HCT116 (cell line): ENCODE measurements at regions of chr3 and their contacts with region 1.

Region 1: DNA sequence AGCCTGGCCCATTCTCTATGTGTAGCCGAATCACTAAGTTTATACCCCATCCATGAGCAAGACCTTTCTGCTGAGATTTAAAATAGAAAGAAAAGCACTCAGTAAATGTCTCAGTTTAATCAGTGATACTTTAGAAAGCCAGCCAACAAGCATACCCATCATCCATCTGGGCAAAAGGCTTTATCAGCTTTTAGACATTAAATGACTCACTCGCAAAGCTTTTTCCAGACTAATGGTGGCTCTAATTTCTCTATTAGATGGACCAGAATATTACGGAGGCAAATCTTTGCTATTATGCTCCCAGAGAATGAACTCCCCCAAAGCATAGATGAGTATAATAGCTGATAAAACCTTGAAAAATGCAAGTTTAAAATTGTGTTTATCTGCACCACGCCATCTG is 727.8 kb downstream of the GBE1 start:
- DNase-seq: no peak
- ATAC-seq: no peak
- H3K4me3 ChIP-seq: no peak overlapping the region
- H3K27ac ChIP-seq: no peak overlapping the region
- H3K4me1 ChIP-seq: no peaks in the 10 kb centered on the region
- H3K27me3 ChIP-seq: no peaks in the 10 kb centered on the region
- CTCF ChIP-seq: no peak
- POLR2A ChIP-seq: no peak
- RAD21 ChIP-seq: no peak

Region 2: DNA sequence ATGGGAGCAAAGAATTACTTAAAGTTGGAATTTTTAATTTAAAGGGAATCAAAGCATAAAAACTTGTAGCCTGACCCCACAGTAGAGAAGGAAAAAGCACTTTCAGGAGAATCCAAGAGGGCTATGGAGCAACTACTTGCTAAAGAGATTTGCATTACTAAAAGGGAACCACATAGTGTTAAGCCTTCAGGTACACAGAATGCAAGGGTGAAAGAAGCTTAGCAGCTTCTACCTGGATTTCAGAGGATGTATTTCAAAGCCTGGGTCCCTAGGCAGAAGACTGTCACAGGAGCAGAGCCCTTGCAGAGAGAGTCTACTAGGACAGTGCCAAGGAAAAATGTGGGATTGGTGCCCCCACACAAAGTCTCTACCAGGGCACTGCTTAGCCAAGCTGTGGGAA is 152.7 kb after region 1 on chr3:
- CTCF ChIA-PET with region 1: no interaction called
- POLR2A ChIA-PET with region 1: no interaction called
- RAD21 ChIA-PET with region 1: no interaction called
- intact Hi-C with region 1: loop called (anchors 10 kb)
- DNase-seq: no peak
- ATAC-seq: no peak
- H3K4me3 ChIP-seq: no peak overlapping the region
- H3K27ac ChIP-seq: no peak overlapping the region
- H3K4me1 ChIP-seq: no peaks in the 10 kb centered on the region
- H3K27me3 ChIP-seq: no peaks in the 10 kb centered on the region
- CTCF ChIP-seq: no peak
- POLR2A ChIP-seq: no peak
- RAD21 ChIP-seq: no peak